ENCODE measurements at regions of chr7 and their contacts with region 1.

Region 1: GRCh38 chr7:135977007-135977741 is at the start of gene MTPN:
- DNase-seq: peak; percentile 97
- H3K4me3 Mint-ChIP-seq: peak within 1 kb of the TSS; percentile 94
- H3K27ac Mint-ChIP-seq: peak within 1 kb of the TSS; percentile 90
- H3K4me1 Mint-ChIP-seq: peaks cover 74% of the 10 kb centered on the region
- H3K27me3 Mint-ChIP-seq: no peaks in the 10 kb centered on the region
- total RNA-seq, gene MTPN: 135 to 142 TPM

Region 2: DNA sequence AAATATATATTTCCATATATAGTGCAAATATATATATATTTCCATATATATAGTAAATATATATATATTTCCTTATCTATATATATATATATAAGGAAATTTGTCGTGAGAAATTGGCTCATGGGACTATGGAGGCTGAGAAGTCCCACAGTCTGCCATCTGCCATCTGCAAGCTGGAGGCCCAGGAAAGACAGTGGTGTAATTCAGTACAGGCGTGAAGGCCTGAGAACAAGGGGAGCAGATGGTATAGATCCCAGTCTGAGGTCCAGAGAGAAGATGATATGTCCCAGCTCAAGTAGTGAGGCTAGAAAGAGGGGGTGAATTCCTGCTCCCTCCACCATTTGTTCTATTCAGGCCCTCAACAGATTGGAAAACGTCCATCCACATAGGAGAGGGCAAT is 78.9 kb before region 1 on chr7:
- CTCF ChIA-PET with region 1: no interaction called
- POLR2A ChIA-PET with region 1: no interaction called
- DNase-seq: no peak
- H3K4me3 Mint-ChIP-seq: no peak overlapping the region
- H3K27ac Mint-ChIP-seq: no peak overlapping the region
- H3K4me1 Mint-ChIP-seq: no peaks in the 10 kb centered on the region
- H3K27me3 Mint-ChIP-seq: no peaks in the 10 kb centered on the region

Region 3: DNA sequence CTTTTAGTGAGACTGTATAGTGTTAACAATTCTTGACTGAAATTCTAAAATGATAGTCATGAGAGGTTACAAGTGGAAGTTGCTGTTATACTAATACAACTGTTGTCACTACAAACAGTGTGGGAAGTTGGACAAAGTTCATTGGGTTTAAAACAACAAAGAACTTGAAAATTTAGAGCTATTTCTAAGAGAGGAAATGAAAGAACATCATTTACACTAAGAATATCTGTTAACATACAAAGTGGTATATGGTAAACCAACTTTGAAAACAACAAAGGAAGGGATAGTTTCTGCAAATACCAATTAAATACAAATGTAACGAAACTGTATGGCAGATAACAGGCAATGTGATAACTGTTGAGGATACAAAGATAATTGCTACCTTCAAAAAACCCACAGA is 11.6 kb before region 1 on chr7:
- CTCF ChIA-PET with region 1: no interaction called
- POLR2A ChIA-PET with region 1: interaction called, 12 read pairs
- DNase-seq: no peak
- H3K4me3 Mint-ChIP-seq: no peak overlapping the region
- H3K27ac Mint-ChIP-seq: no peak overlapping the region
- H3K4me1 Mint-ChIP-seq: peaks cover 42% of the 10 kb centered on the region
- H3K27me3 Mint-ChIP-seq: no peaks in the 10 kb centered on the region

Region 4: GRCh38 chr7:135993950-135994349 is 16.8 kb after region 1 on chr7:
- CTCF ChIA-PET with region 1: interaction called, 4 read pairs
- POLR2A ChIA-PET with region 1: interaction called, 19 read pairs
- DNase-seq: no peak
- H3K4me3 Mint-ChIP-seq: no peak overlapping the region
- H3K27ac Mint-ChIP-seq: peak overlapping the region; percentile 45
- H3K4me1 Mint-ChIP-seq: peaks cover 26% of the 10 kb centered on the region
- H3K27me3 Mint-ChIP-seq: no peaks in the 10 kb centered on the region

Region 5: DNA sequence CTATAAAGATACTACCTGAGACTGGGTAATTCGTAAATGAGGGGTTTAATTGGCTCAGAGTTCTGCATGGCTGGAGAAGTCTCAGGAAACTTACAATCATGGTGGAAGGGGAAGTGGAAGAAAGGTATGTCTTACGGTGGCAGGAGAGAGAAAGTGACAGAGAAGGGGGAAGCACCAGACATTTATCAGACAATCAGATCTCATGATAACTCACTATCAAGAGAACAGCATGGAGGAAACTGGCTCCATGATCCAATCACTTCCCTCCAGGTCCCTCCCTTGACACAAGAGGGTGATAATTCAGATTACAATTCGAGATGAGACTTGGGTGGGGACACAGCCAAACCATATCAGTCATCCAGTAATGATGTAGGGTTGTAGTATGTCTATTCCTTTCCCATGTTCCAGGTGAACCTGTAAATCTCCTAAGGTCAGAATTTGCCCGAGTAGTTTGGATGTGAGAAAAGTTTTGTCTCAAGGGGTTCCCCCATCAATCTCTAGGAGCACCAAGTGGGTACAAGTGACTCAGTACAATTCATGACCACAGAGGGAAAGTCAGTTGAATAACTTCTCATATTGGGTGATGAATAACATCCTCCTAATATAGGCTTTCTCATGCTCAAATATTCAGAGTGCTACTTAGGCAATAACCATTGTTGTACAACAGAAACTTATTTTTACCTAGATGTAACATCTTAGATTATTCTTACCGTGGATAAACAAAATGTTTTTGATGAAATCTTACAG is 39.6 kb after region 1 on chr7:
- CTCF ChIA-PET with region 1: no interaction called
- POLR2A ChIA-PET with region 1: no interaction called
- DNase-seq: no peak
- H3K4me3 Mint-ChIP-seq: no peak overlapping the region
- H3K27ac Mint-ChIP-seq: no peak overlapping the region
- H3K4me1 Mint-ChIP-seq: peaks cover 2% of the 10 kb centered on the region
- H3K27me3 Mint-ChIP-seq: peaks cover 12% of the 10 kb centered on the region

Region 6: DNA sequence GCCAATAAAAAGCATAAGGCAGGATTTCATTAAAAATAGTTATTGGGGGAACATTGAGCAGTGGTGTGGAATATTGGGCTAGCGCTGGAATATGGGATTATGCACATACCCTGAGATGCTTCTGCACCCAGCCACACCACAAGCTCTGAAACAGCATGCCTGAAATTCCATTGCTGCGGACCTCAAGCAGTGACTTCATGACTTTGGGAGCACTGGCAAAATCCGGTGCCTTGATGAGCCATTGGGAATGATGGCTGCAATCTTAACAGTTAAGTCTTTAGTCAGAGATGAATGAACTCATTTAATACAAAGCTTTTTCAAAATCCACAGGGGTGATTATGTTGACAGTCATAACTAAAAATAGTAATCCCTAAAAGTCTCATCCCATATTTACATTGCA is 274.7 kb after region 1 on chr7:
- CTCF ChIA-PET with region 1: no interaction called
- POLR2A ChIA-PET with region 1: no interaction called
- DNase-seq: no peak
- H3K4me3 Mint-ChIP-seq: no peak overlapping the region
- H3K27ac Mint-ChIP-seq: no peak overlapping the region
- H3K4me1 Mint-ChIP-seq: no peaks in the 10 kb centered on the region
- H3K27me3 Mint-ChIP-seq: no peaks in the 10 kb centered on the region